Activated CD4-positive, alpha-beta memory T cell treated with anti-CD3 and anti-CD28 coated beads, Interleukin-2, amount 10 ng/mL, durations not matched to agents 7 days and 5 days (primary cell): ENCODE measurements at regions of chr13 and their contacts with region 1.

Region 1: GRCh38 chr13:32427852-32428580 is at the start of gene N4BP2L1:
- DNase-seq: peak; percentile 82
- H3K4me3 Mint-ChIP-seq: peak within 1 kb of the TSS; percentile 99
- H3K27ac Mint-ChIP-seq: peak within 1 kb of the TSS; percentile 99
- H3K4me1 Mint-ChIP-seq: peaks cover 42% of the 10 kb centered on the region
- H3K27me3 Mint-ChIP-seq: no peaks in the 10 kb centered on the region
- total RNA-seq, gene N4BP2L1: 29.9 to 33.8 TPM

Region 2: DNA sequence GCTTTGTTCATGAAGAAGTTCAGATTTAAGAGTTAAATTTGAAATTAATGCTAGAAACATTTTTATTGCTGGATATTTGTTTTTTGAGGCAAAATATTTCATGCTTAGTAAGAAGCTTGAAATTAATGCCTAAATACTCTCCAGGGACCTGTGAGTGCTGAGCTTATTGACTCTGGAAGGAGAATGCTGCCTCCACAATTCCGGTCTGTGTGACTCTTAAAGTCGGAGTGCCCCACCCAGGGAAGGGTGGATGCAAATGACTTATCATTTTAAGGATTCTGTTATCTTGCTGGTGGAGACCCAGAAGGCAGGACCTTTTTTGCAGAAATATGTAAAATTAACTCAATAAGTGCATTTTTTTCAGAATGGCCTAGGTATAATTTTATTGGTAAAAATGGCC is 832.5 kb before region 1 on chr13:
- CTCF ChIA-PET with region 1: no interaction called
- POLR2A ChIA-PET with region 1: no interaction called
- DNase-seq: no peak
- H3K4me3 Mint-ChIP-seq: no peak overlapping the region
- H3K27ac Mint-ChIP-seq: no peak overlapping the region
- H3K4me1 Mint-ChIP-seq: no peaks in the 10 kb centered on the region
- H3K27me3 Mint-ChIP-seq: peaks cover 11% of the 10 kb centered on the region

Region 3: DNA sequence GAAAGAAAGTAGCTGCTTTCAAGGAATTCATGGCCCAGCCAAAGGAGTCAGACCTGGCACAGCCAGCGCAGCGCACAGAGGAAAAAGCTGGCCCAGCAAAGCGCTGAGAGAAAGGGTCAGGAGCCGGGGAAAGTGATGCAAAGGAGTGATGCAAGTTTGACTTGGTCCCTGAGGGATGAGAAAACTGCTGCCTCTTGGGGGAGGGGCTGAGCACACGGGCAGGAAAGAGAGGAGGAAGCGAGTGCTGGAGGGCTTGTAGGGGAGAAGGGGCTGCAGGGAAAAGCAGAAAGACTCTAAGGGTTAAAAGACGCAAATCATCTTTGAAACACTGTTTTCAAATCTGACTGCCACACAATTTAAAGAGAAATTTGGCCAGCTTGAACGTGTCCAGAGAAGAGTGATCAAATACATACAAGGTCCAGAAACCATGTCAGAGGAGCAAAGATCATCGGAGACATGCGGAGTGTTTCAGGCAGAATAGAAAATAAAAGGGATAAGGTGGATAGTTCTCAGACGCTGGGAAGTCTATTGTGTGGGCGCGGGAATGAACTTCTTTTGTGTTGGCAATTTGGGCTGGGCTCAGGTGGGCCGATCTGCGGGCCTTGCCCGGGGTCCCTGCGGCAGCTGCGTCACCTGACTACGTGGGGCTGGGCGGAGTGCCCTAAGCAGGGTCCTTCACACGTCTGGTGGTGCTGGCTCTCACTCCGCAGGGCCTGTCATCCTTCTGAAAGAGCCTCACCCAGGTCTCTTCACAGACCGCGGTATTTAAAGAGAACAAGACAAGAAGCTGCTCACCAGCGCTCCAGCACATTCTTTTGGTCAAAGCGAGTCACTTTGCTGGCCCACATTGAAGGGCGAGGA is 18.2 kb before region 1 on chr13:
- CTCF ChIA-PET with region 1: interaction called, 6 read pairs
- POLR2A ChIA-PET with region 1: interaction called, 36 read pairs
- DNase-seq: no peak
- H3K4me3 Mint-ChIP-seq: no peak overlapping the region
- H3K27ac Mint-ChIP-seq: no peak overlapping the region
- H3K4me1 Mint-ChIP-seq: peaks cover 22% of the 10 kb centered on the region
- H3K27me3 Mint-ChIP-seq: no peaks in the 10 kb centered on the region

Region 4: GRCh38 chr13:32538621-32539246 is 110.7 kb after region 1 on chr13 and contains the start of gene N4BP2L2:
- CTCF ChIA-PET with region 1: interaction called, 3 read pairs
- POLR2A ChIA-PET with region 1: interaction called, 37 read pairs
- DNase-seq: peak; percentile 93
- H3K4me3 Mint-ChIP-seq: peak within 1 kb of the TSS; percentile 95
- H3K27ac Mint-ChIP-seq: peak within 1 kb of the TSS; percentile 98
- H3K4me1 Mint-ChIP-seq: peaks cover 42% of the 10 kb centered on the region
- H3K27me3 Mint-ChIP-seq: peaks cover 2% of the 10 kb centered on the region
- total RNA-seq, gene N4BP2L2: 119 to 126 TPM

Region 5: GRCh38 chr13:32659736-32660626 is 232.0 kb after region 1 on chr13:
- CTCF ChIA-PET with region 1: no interaction called
- POLR2A ChIA-PET with region 1: no interaction called
- DNase-seq: no peak
- H3K4me3 Mint-ChIP-seq: no peak overlapping the region
- H3K27ac Mint-ChIP-seq: no peak overlapping the region
- H3K4me1 Mint-ChIP-seq: peaks cover 7% of the 10 kb centered on the region
- H3K27me3 Mint-ChIP-seq: no peaks in the 10 kb centered on the region